ENCODE measurements at regions of chr12 and their contacts with region 1.

Region 1: DNA sequence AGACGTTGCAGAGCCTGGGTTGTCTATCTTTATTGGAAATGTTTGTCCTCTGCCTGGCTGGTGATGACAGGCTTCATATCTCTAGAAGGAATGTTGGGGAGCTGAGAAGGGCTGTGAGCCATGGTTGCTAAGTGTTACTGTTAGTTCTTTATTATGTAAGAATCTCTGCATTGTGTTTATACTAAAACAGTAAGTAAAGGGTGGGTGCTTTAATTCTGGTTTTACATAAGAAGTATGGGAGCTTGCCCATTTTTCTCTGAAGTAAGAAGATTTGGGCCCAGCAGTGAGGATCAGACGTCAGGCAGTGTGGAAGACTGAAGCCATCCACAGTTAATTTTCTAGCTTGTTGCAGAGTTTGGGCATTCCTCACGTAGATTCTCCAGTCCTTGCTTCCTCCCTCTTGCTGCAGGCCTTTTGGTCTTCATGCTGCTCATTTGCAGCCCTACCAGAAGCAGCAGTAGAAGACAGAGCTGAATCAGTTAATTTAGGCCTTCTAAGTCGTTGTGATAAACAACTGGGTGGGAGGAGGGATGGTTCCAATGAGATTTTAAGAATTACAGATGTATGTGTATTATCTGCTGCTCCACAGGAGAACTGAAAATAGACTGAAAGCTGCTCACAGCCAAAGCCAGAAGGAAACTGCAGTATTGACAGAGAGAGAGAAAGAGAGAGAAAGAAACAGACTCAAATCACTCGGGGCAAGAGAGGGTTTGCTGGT is 21.4 kb downstream of the WNT5B start:
- DNase-seq: no peak
- H3K4me3 ChIP-seq: no peak overlapping the region
- H3K27ac ChIP-seq: no peak overlapping the region
- H3K4me1 ChIP-seq: no peaks in the 10 kb centered on the region
- CTCF ChIP-seq: no peak

Region 2: GRCh38 chr12:1282670-1283335 is 367.6 kb before region 1 on chr12:
- CTCF ChIA-PET with region 1: no interaction called
- POLR2A ChIA-PET with region 1: no interaction called
- intact Hi-C with region 1: no loop called
- DNase-seq: no peak
- H3K4me3 ChIP-seq: no peak overlapping the region
- H3K27ac ChIP-seq: no peak overlapping the region
- H3K4me1 ChIP-seq: no peaks in the 10 kb centered on the region
- CTCF ChIP-seq: no peak

Region 3: DNA sequence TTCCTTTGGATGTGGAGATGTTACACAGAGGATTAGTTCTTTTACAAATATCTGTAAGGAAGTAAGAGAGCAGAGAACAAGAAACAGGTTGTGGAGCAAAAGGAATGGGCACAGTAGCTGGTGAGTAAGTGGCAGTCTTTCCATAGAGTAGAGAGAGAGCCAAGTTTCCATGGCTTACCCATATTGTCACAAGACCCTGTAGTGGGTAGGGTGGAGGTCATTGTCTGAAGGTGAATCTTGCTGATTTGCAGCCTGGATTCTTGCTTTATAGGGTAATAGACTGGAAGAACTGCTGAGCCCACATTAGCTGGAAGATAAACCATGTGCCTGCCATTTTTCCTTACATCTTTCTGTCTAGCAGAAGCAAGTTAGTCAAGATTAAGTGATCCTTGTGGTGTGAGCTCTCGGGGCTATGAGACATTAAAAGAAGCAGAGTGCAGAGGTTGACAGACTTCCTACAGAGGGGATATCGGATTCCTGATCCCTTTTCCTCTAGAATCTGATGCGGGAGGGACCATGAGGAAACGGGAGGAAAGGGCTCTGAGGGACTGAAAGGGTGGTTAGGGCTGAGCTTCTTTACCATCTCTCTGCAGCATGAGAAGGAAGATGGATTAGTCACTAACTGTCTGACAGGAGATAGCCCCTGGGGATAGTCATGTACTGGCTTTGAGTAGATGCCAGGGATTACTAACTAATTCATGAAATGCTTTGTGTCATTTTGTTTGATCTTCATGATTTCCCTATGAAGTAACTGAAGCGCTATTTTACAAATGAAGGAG is 125.9 kb after region 1 on chr12:
- CTCF ChIA-PET with region 1: no interaction called
- POLR2A ChIA-PET with region 1: no interaction called
- intact Hi-C with region 1: no loop called
- DNase-seq: no peak
- H3K4me3 ChIP-seq: no peak overlapping the region
- H3K27ac ChIP-seq: no peak overlapping the region
- H3K4me1 ChIP-seq: no peaks in the 10 kb centered on the region
- CTCF ChIP-seq: no peak

Region 4: DNA sequence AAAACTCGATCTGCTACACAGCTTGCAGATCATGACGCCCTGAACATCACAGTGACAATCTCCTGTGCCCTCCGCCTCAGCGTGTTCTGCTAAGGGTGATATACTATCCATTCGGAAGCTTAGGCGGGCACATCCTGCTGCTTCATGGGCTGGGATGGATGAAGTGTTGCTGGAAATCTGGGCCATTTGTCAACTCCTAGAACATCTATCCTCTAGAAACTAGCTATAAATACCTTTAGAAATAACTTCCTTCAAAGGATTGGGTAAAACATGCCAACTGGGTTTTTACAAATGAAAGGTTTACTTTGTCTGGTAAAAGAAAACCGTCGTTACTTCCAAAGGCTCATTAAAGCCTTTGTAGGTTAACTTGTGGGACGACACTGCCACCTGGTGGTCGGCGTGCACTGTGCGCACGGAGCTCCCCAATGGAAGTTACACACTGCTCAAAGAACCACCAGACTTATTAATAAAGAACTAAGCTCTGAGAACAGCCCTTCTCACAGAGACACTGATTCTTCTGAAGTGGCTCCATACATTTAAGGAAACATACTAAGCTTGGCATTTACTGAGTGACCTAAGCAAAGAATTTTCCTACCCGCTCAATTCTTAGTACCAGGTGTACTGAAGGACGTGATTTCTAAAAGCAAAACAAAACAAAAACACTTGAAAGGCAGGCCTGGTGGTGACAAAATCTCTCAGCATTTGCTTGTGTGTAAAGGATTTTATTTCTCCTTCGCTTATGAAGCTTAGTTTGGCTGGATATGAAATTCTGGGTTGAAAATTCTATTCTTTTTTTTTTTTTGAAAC is 289.6 kb after region 1 on chr12:
- CTCF ChIA-PET with region 1: no interaction called
- POLR2A ChIA-PET with region 1: no interaction called
- intact Hi-C with region 1: loop called (anchors 2 kb)
- DNase-seq: peak; percentile 80
- H3K4me3 ChIP-seq: no peak overlapping the region
- H3K27ac ChIP-seq: no peak overlapping the region
- H3K4me1 ChIP-seq: no peaks in the 10 kb centered on the region
- CTCF ChIP-seq: peak; percentile 100